GM12878 (cell line): ENCODE measurements at regions of chr20 and their contacts with region 1.

Region 1: DNA sequence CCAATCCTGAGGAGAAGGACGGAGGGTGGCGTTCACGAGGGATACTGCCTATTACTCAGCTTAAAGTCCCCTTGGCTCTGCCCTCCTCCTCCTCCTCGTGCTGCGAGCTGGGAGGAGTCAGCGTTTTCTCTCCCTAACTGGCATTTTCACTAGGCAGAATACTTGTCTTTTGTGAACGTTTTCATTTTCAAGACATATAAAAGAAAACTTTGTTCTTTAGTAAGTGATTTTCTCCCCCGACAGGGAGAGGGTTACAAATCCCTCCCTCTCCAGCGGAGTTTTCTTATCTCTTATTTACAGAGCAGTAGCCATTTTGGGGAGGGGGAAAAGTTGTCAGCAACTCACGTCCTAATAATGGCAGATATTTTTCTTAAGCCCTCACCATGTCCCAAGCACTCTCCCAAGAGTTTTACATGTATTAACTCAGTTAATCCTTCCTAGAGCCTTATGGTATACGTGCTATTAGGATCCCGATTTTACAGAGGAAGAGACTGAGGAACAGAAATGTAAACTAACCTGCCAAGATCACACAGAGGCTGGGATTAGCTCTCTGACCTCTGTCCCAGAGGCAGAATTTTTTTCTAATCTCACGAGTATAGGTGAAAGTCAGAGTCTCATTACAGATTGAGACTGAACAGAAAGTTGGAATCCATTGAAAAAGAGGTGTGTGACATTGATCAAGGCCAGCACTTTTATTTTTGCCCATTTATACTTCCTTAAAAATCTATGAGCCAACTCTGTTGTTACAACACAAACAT is 30.0 kb upstream of the ZNF217 start:
- DNase-seq: peak; percentile 60
- ATAC-seq: peak; percentile 81
- H3K4me3 ChIP-seq: peak overlapping the region; percentile 54
- H3K27ac ChIP-seq: peak overlapping the region; percentile 99
- H3K4me1 ChIP-seq: peaks cover 38% of the 10 kb centered on the region
- H3K27me3 ChIP-seq: no peaks in the 10 kb centered on the region
- CTCF ChIP-seq: 0 out of 6 replicates have a peak, but pooled peaks of 1 of the 3 experiments have one; percentile 8
- EP300 ChIP-seq: no peak
- POLR2A ChIP-seq: peak; percentile 61
- RAD21 ChIP-seq: 0 out of 2 replicates have a peak, but pooled peaks have one; percentile 10

Region 2: DNA sequence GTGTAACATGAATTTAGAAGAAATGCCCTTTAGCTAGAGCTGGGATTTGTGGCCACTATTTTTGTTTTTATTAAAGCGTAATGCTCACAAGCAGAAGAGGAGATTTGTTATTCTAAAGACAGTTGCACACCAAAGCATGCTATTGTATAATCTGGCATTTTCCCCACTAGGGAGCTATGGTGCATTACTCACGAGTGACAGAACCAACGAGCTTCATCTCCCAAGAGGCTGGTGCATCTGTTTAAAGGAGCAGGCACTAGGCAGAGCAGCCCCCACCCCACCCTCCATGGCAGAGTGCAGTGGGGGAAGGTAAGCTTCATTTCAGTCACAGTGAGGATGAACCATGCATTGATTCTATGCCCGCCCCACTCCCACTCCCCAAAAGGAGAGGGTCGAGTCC is 938.7 kb before region 1 on chr20:
- CTCF ChIA-PET with region 1: no interaction called
- POLR2A ChIA-PET with region 1: no interaction called
- RAD21 ChIA-PET with region 1: no interaction called
- SMC1A ChIA-PET with region 1: no interaction called
- in situ Hi-C with region 1: no loop called
- intact Hi-C with region 1: no loop called
- DNase-seq: no peak
- ATAC-seq: no peak
- H3K4me3 ChIP-seq: no peak overlapping the region
- H3K27ac ChIP-seq: no peak overlapping the region
- H3K4me1 ChIP-seq: no peaks in the 10 kb centered on the region
- H3K27me3 ChIP-seq: no peaks in the 10 kb centered on the region
- CTCF ChIP-seq: no peak
- EP300 ChIP-seq: no peak
- POLR2A ChIP-seq: no peak
- RAD21 ChIP-seq: no peak

Region 3: GRCh38 chr20:53586640-53587039 is 37.0 kb before region 1 on chr20:
- CTCF ChIA-PET with region 1: no interaction called
- POLR2A ChIA-PET with region 1: interaction called, 3 read pairs
- RAD21 ChIA-PET with region 1: interaction called, 12 read pairs
- SMC1A ChIA-PET with region 1: interaction called, 14 read pairs
- in situ Hi-C with region 1: no loop called
- intact Hi-C with region 1: loop called (anchors 5 kb)
- DNase-seq: no peak
- ATAC-seq: no peak
- H3K4me3 ChIP-seq: peak overlapping the region; percentile 83
- H3K27ac ChIP-seq: peak overlapping the region; percentile 65
- H3K4me1 ChIP-seq: peaks cover 3% of the 10 kb centered on the region
- H3K27me3 ChIP-seq: no peaks in the 10 kb centered on the region
- CTCF ChIP-seq: no peak
- EP300 ChIP-seq: no peak
- POLR2A ChIP-seq: no peak
- RAD21 ChIP-seq: no peak

Region 4: GRCh38 chr20:53611449-53611894 is 12.2 kb before region 1 on chr20:
- CTCF ChIA-PET with region 1: interaction called, 46 read pairs
- POLR2A ChIA-PET with region 1: interaction called, 84 read pairs
- RAD21 ChIA-PET with region 1: interaction called, 79 read pairs
- SMC1A ChIA-PET with region 1: interaction called, 94 read pairs
- in situ Hi-C with region 1: no loop called
- intact Hi-C with region 1: no loop called
- DNase-seq: peak; percentile 82
- ATAC-seq: peak; percentile 84
- H3K4me3 ChIP-seq: peak overlapping the region; percentile 15; the same call in 1 of the 2 replicates
- H3K27ac ChIP-seq: peak overlapping the region; percentile 87
- H3K4me1 ChIP-seq: peaks cover 15% of the 10 kb centered on the region
- H3K27me3 ChIP-seq: no peaks in the 10 kb centered on the region
- CTCF ChIP-seq: no peak
- EP300 ChIP-seq: peak; percentile 71 to 80; a peak in 3 of 4 replicates
- POLR2A ChIP-seq: no peak
- RAD21 ChIP-seq: no peak

Region 5: GRCh38 chr20:53643031-53643832 is 19.6 kb after region 1 on chr20:
- CTCF ChIA-PET with region 1: interaction called, 11 read pairs
- POLR2A ChIA-PET with region 1: interaction called, 29 read pairs
- RAD21 ChIA-PET with region 1: interaction called, 34 read pairs
- SMC1A ChIA-PET with region 1: interaction called, 76 read pairs
- in situ Hi-C with region 1: no loop called
- intact Hi-C with region 1: no loop called
- DNase-seq: peak; percentile 92
- ATAC-seq: peak; percentile 99
- H3K4me3 ChIP-seq: peak overlapping the region; percentile 37
- H3K27ac ChIP-seq: peak overlapping the region; percentile 88
- H3K4me1 ChIP-seq: peaks cover 15% of the 10 kb centered on the region
- H3K27me3 ChIP-seq: no peaks in the 10 kb centered on the region
- CTCF ChIP-seq: 0 out of 6 replicates have a peak, but pooled peaks of 1 of the 3 experiments have one; percentile 7
- EP300 ChIP-seq: peak; percentile 18 to 87; a peak in 3 of 4 replicates
- POLR2A ChIP-seq: peak; percentile 83
- RAD21 ChIP-seq: 0 out of 2 replicates have a peak, but pooled peaks have one; percentile 13

Region 6: DNA sequence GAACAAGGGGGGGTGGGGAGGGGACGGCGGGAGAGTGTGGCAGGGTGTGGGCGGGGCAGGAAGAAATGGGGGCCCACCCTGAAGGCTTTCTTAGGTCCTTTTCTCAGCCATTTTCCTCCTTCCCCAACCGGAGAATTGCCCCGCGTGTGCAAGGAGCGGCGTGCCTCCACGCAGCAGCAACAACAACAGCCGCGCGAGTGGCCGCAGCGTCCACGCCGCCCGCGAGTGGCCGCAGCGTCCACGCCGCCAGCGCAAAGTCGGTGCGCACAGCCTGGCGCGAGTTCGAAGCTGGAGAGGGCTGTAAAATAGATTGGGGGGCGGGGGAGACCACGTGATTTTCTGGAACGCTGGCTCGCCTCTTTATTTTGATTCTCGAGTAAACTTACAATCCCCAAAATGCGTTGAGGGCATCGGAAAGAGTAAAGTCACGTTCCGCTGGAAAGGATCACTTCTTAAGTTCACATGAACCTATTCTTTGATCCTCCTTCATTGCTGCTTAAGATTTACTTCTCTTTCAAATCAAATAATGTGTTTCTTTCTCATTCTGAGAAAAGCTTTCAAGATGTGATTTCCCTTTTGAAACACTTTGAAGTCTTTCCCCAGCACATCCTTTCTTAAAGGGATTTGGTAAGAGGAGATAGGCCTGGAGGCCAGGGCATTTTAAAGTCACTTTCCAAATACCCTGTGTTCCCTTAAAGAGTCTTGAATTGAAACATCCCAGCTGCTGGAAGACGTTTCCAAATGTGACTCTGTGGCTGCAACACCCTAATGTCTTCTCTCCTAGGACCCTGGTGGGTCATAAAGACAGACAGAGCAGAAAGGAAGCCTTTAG is 36.7 kb after region 1 on chr20:
- CTCF ChIA-PET with region 1: interaction called, 5 read pairs
- POLR2A ChIA-PET with region 1: interaction called, 20 read pairs
- RAD21 ChIA-PET with region 1: interaction called, 11 read pairs
- SMC1A ChIA-PET with region 1: interaction called, 28 read pairs
- in situ Hi-C with region 1: no loop called
- intact Hi-C with region 1: loop called (anchors 2 kb)
- DNase-seq: no peak
- ATAC-seq: peak; percentile 27
- H3K4me3 ChIP-seq: peak overlapping the region; percentile 63
- H3K27ac ChIP-seq: peak overlapping the region; percentile 84
- H3K4me1 ChIP-seq: peaks cover 61% of the 10 kb centered on the region
- H3K27me3 ChIP-seq: no peaks in the 10 kb centered on the region
- CTCF ChIP-seq: no peak
- EP300 ChIP-seq: no peak; a peak in 1 of 4 replicates
- POLR2A ChIP-seq: peak; percentile 41; the same call in 1 of the 2 replicates
- RAD21 ChIP-seq: 0 out of 2 replicates have a peak, but pooled peaks have one; percentile 4

Region 7: DNA sequence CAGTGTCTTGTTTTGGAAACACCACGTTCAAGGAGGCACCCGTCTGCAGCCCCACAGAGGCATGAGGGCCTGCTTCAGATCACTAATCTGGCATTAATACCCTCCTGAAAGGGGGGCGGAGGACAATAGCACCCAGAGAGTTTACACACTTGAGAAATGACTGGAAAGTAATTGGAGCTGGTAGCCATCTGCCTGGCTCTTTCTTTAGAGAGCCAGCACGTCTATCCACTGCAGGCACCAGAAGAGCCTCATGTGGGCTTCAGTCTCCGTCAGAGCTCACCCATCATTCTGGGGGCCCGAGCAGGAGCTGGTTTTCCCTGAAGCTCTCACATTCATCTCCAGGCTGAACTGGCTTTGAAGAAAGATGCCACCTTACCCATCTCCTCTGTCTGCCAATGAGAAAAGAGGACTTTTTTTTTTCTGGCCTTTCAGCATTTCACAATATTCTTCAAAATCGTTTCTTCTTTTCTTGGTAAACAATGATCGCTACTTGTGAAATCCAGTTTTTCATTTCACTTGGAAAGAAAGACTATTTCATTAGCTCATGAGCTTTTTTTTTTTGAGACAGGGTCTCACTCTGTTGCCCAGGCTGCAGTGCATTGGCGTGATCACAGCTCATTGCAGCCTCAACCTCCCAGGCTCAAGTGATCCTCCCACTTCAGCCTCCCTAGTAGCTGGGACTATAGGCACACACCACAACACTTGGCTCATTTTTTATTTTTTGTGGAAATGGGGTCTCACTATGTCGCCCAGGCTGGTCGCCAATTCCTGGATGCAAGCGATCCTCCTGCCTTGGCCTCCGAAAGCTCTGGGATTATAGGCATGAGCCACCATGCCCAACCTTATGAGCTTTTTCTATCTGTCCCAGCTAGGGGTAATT is 94.7 kb after region 1 on chr20:
- CTCF ChIA-PET with region 1: no interaction called
- POLR2A ChIA-PET with region 1: interaction called, 4 read pairs
- RAD21 ChIA-PET with region 1: interaction called, 4 read pairs
- SMC1A ChIA-PET with region 1: interaction called, 12 read pairs
- in situ Hi-C with region 1: no loop called
- intact Hi-C with region 1: no loop called
- DNase-seq: no peak
- ATAC-seq: no peak
- H3K4me3 ChIP-seq: no peak overlapping the region
- H3K27ac ChIP-seq: no peak overlapping the region
- H3K4me1 ChIP-seq: peaks cover 22% of the 10 kb centered on the region
- H3K27me3 ChIP-seq: no peaks in the 10 kb centered on the region
- CTCF ChIP-seq: no peak
- EP300 ChIP-seq: no peak
- POLR2A ChIP-seq: no peak
- RAD21 ChIP-seq: no peak

Region 8: GRCh38 chr20:53786445-53787267 is 163.0 kb after region 1 on chr20:
- CTCF ChIA-PET with region 1: no interaction called
- POLR2A ChIA-PET with region 1: no interaction called
- RAD21 ChIA-PET with region 1: no interaction called
- SMC1A ChIA-PET with region 1: no interaction called
- in situ Hi-C with region 1: no loop called
- intact Hi-C with region 1: no loop called
- DNase-seq: no peak
- ATAC-seq: no peak; the same call in 2 of the 3 replicates
- H3K4me3 ChIP-seq: no peak overlapping the region
- H3K27ac ChIP-seq: no peak overlapping the region
- H3K4me1 ChIP-seq: peaks cover 12% of the 10 kb centered on the region
- H3K27me3 ChIP-seq: no peaks in the 10 kb centered on the region
- CTCF ChIP-seq: no peak
- EP300 ChIP-seq: no peak
- POLR2A ChIP-seq: no peak
- RAD21 ChIP-seq: no peak